PC-9 (cell line): ENCODE measurements at regions of chr12 and their contacts with region 1.

Region 1: GRCh38 chr12:1171657-1172408 is 180.8 kb downstream of the ERC1 start:
- DNase-seq: peak; percentile 47 to 81
- H3K4me3 ChIP-seq: no peak overlapping the region
- H3K27ac ChIP-seq: peak overlapping the region; percentile 23; the same call in 1 of the 2 replicates
- H3K4me1 ChIP-seq: peaks cover 20% of the 10 kb centered on the region
- H3K27me3 ChIP-seq: no peaks in the 10 kb centered on the region
- CTCF ChIP-seq: no peak

Region 2: GRCh38 chr12:1130164-1130563 is 41.7 kb before region 1 on chr12:
- CTCF ChIA-PET with region 1: no interaction called
- POLR2A ChIA-PET with region 1: interaction called, 10 read pairs
- intact Hi-C with region 1: no loop called
- DNase-seq: peak; percentile 74 to 98
- H3K4me3 ChIP-seq: peak overlapping the region; percentile 13; the same call in 1 of the 2 replicates
- H3K27ac ChIP-seq: peak overlapping the region; percentile 69
- H3K4me1 ChIP-seq: peaks cover 34% of the 10 kb centered on the region
- H3K27me3 ChIP-seq: no peaks in the 10 kb centered on the region
- CTCF ChIP-seq: no peak

Region 3: DNA sequence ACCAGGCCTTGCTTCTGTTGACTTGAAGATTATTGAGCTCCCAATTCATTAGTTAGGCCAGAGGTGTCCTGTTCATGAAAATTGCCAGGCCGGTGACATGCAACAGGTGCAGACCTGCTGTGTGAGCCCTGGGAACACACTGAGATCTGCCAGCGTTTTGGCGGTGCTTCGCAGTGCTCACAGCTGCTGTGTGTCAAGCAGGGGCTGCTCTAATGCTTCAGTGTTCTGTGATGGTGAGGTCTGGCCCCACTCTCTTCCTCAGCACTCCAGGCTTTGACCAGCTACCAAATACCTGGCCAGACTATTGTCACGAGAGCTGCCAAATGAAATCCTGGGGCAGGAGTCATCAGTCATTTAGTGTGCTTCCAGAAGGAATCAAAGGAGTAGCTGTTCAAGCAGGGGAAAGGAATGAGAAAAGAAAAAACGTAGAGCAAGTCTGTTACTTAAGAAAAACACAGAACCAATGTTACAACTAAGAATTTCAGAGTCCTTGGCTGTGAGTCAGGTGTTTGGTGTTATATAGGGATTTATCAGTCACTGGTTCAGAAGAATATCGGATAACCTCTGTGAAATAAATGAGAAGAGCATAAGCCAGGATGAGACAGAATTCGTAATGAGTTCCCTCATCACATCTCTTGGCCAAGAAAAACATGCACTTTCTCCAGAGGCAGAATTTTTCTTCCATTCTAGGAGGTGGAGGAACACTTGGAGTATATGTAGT is 271.7 kb after region 1 on chr12:
- CTCF ChIA-PET with region 1: no interaction called
- POLR2A ChIA-PET with region 1: interaction called, 18 read pairs
- intact Hi-C with region 1: no loop called
- DNase-seq: no peak
- H3K4me3 ChIP-seq: no peak overlapping the region
- H3K27ac ChIP-seq: no peak overlapping the region
- H3K4me1 ChIP-seq: no peaks in the 10 kb centered on the region
- H3K27me3 ChIP-seq: no peaks in the 10 kb centered on the region
- CTCF ChIP-seq: no peak

Region 4: GRCh38 chr12:1527789-1528188 is 356.0 kb after region 1 on chr12:
- CTCF ChIA-PET with region 1: no interaction called
- POLR2A ChIA-PET with region 1: no interaction called
- intact Hi-C with region 1: no loop called
- DNase-seq: no peak
- H3K4me3 ChIP-seq: no peak overlapping the region
- H3K27ac ChIP-seq: no peak overlapping the region
- H3K4me1 ChIP-seq: no peaks in the 10 kb centered on the region
- H3K27me3 ChIP-seq: peaks cover 22% of the 10 kb centered on the region
- CTCF ChIP-seq: no peak

Region 5: DNA sequence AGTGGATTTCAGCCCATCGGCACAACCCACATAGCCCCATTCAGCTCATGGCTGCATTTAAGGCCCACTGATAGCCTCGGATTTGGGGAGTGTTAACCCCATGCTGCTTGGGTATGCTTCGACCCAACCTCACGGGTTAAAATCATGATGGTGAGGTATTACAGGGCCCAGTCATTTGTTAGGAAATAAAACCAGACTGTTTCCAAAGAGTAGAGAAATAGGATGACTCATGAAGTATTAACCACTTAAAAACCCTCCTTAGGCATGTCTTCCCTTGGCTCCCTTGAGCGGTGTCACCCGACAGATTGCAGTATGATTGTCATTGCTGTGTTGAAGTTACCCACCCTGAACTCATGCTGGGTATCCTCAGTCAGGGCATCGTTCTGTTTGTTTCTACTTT is 1170.0 kb after region 1 on chr12:
- CTCF ChIA-PET with region 1: interaction called, 10 read pairs
- POLR2A ChIA-PET with region 1: no interaction called
- intact Hi-C with region 1: no loop called
- DNase-seq: no peak
- H3K4me3 ChIP-seq: no peak overlapping the region
- H3K27ac ChIP-seq: no peak overlapping the region
- H3K4me1 ChIP-seq: no peaks in the 10 kb centered on the region
- H3K27me3 ChIP-seq: peaks cover 71% of the 10 kb centered on the region
- CTCF ChIP-seq: no peak